Activated CD4-positive, alpha-beta memory T cell treated with anti-CD3 and anti-CD28 coated beads, Interleukin-2, amount 10 ng/mL, durations not matched to agents 7 days and 5 days (primary cell): ENCODE measurements at regions of chr18 and their contacts with region 1.

Region 1: GRCh38 chr18:36015629-36016028 is 43.1 kb downstream of the RMP24 start:
- DNase-seq: no peak
- H3K4me3 Mint-ChIP-seq: no peak overlapping the region
- H3K27ac Mint-ChIP-seq: no peak overlapping the region
- H3K4me1 Mint-ChIP-seq: no peaks in the 10 kb centered on the region
- H3K27me3 Mint-ChIP-seq: no peaks in the 10 kb centered on the region

Region 2: DNA sequence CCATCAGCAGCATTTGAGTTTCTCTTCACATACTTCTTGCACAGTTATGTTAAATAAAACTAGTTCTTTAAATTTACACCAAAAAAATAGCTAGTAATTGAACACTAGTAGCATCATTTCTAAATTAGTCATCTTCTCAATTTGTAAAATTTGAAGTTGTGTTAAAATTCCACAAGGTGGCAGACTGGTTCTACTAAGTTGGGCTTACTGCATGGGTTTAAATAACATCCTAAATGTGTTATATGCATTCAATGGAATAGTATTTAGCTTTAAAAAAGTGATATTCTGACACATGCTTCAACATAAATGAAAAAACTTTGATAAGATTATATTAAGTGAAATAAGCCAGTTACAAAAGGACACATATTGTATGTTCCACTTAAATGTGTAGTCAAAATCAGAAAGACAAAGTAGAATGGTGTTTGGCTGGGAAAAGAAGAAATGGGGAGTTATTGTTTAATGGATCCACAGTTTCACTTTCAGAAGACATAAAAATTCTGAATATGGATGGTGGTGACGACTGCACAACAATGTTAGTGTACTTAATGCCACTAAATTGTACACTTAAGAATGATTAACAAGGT is 80.4 kb after region 1 on chr18:
- CTCF ChIA-PET with region 1: interaction called, 24 read pairs
- POLR2A ChIA-PET with region 1: no interaction called
- DNase-seq: no peak
- H3K4me3 Mint-ChIP-seq: no peak overlapping the region
- H3K27ac Mint-ChIP-seq: no peak overlapping the region
- H3K4me1 Mint-ChIP-seq: peaks cover 12% of the 10 kb centered on the region
- H3K27me3 Mint-ChIP-seq: peaks cover 8% of the 10 kb centered on the region